ENCODE measurements at regions of chr12 and their contacts with region 1.

Region 1: GRCh38 chr12:49121047-49121696 is 10.0 kb downstream of the TUBA1B start:
- DNase-seq: peak; percentile 77
- H3K4me3 ChIP-seq: no peak overlapping the region; a peak in 1 of 4 replicates
- H3K27ac ChIP-seq: no peak overlapping the region
- H3K4me1 ChIP-seq: no peaks in the 10 kb centered on the region; a peak in 1 of 4 replicates
- H3K27me3 ChIP-seq: no peaks in the 10 kb centered on the region
- CTCF ChIP-seq: peak; percentile 72
- EP300 ChIP-seq: no peak
- RAD21 ChIP-seq: peak; percentile 85

Region 2: GRCh38 chr12:49110464-49111155 is 10.6 kb before region 1 on chr12 and contains the start of gene LMBR1L:
- CTCF ChIA-PET with region 1: interaction called, 30 read pairs
- POLR2A ChIA-PET with region 1: interaction called, 3 read pairs
- DNase-seq: peak; percentile 97
- H3K4me3 ChIP-seq: peak within 1 kb of the TSS; percentile 82 to 100
- H3K27ac ChIP-seq: peak within 1 kb of the TSS; percentile 85 to 88
- H3K4me1 ChIP-seq: peaks cover 0 to 12% of the 10 kb centered on the region in 2 experiments; a peak in 1 of 4 replicates
- H3K27me3 ChIP-seq: no peaks in the 10 kb centered on the region
- CTCF ChIP-seq: peak; percentile 46
- EP300 ChIP-seq: no peak
- RAD21 ChIP-seq: peak; percentile 12; the same call in 1 of the 2 replicates
- polyA plus RNA-seq, gene LMBR1L: 43.0 and 61.4 TPM in 2 replicates

Measured in SK-N-SH (cell line).